ENCODE measurements at regions of chr14 and their contacts with region 1.

Region 1: DNA sequence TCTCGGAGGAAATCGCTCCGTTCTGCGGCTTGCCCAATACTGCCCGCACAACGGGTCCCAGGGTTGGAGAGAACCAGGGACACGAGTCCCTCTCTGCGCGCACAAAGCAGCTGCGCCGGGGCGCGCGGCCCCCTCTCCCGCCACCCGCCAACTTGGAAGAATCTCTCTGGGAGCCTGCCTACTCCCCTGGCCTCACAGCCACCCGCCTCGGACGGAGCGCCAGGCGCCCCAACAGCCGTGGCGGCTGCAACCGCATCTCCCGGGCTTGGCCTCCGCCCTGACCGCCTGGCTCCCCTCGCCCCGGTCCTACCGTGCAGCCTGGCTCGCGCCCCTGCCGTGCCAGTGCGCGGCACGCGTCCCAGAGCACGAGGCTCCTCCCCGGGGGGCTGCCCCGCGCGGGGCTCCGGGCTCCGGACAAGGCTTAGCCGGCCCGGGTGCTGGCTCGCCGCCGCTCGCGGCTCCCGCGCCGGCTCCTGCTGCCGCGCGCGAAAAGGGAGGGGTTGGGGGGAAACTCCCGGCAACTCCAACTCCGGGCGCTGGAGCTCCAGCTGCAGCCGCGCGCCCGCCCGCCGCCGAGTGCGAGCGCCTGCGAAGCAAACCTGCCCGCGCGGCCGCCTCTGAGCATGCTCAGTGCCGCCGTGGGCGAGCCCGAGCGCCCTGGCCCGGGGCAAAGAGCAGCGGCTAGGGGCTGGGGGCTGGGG is at the start of gene STXBP6:
- DNase-seq: peak; percentile 77
- H3K4me3 ChIP-seq: peak within 1 kb of the TSS; percentile 68 to 83
- H3K27ac ChIP-seq: peak within 1 kb of the TSS; percentile 60 to 74
- H3K4me1 ChIP-seq: peaks cover 20% of the 10 kb centered on the region
- H3K27me3 ChIP-seq: no peaks in the 10 kb centered on the region
- CTCF ChIP-seq: peak in 1 of 4 experiments; percentile 25
- POLR2A ChIP-seq: peak; percentile 45
- total RNA-seq, gene STXBP6: 12.4 to 32.3 TPM

Region 2: GRCh38 chr14:24908592-24909236 is 141.0 kb before region 1 on chr14:
- intact Hi-C with region 1: loop called (anchors 5 kb)
- DNase-seq: peak; percentile 11
- H3K4me3 ChIP-seq: no peak overlapping the region
- H3K27ac ChIP-seq: peak overlapping the region in 1 of 2 donors; percentile 63
- H3K4me1 ChIP-seq: peaks cover 10% of the 10 kb centered on the region
- H3K27me3 ChIP-seq: no peaks in the 10 kb centered on the region
- CTCF ChIP-seq: no peak
- POLR2A ChIP-seq: no peak

Region 3: DNA sequence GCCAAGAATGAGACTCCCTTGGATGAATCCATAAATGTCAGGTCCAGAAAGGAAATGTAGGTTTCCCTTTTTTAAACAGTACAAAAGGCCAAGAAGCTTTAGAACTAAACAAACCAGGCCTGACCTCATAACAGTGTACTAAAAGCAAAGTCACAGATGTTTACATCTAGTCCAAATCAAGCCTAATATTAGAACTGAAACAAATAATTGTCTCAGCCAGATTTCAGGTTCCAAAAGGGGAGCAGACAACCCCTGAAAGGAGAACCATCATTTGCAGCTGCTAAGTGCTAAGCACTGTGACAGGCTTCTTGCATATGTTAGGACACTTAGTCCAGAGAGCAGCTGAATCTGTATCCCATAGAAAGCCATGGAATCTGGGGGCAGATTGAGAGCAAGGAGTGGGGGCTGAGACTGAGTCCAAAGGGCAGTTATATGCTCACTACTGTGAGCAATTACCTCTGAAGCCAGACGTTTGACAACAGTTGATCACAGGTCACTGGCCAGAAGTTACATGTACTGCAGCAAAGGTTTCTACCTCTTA is 89.9 kb before region 1 on chr14:
- intact Hi-C with region 1: loop called (anchors 5 kb)
- DNase-seq: no peak
- H3K4me3 ChIP-seq: no peak overlapping the region
- H3K27ac ChIP-seq: peak overlapping the region; percentile 11 to 46
- H3K4me1 ChIP-seq: no peaks in the 10 kb centered on the region
- H3K27me3 ChIP-seq: no peaks in the 10 kb centered on the region
- CTCF ChIP-seq: no peak
- POLR2A ChIP-seq: no peak